HepG2 (cell line): ENCODE measurements at regions of chr21 and their contacts with region 1.

Region 1: GRCh38 chr21:32359711-32360260 is 33.0 kb downstream of the URB1 start:
- DNase-seq: peak; percentile 52
- ATAC-seq: peak; percentile 80
- H3K4me3 ChIP-seq: no peak overlapping the region
- H3K27ac ChIP-seq: no peak overlapping the region
- H3K4me1 ChIP-seq: peaks cover 15% of the 10 kb centered on the region
- H3K27me3 ChIP-seq: no peaks in the 10 kb centered on the region
- CTCF ChIP-seq: peak; percentile 60
- EP300 ChIP-seq: no peak
- POLR2A ChIP-seq: no peak
- RAD21 ChIP-seq: no peak

Region 2: GRCh38 chr21:32306021-32306780 is 53.6 kb before region 1 on chr21:
- CTCF ChIA-PET with region 1: no interaction called
- POLR2A ChIA-PET with region 1: no interaction called
- in situ Hi-C with region 1: no loop called
- intact Hi-C with region 1: loop called (anchors 5 kb)
- DNase-seq: peak; percentile 41
- ATAC-seq: peak; percentile 85
- H3K4me3 ChIP-seq: no peak overlapping the region
- H3K27ac ChIP-seq: no peak overlapping the region
- H3K4me1 ChIP-seq: peaks cover 27% of the 10 kb centered on the region
- H3K27me3 ChIP-seq: no peaks in the 10 kb centered on the region
- CTCF ChIP-seq: peak; percentile 30; the same call in 1 of the 2 replicates
- EP300 ChIP-seq: no peak
- POLR2A ChIP-seq: no peak
- RAD21 ChIP-seq: no peak

Region 3: GRCh38 chr21:32348654-32349587 is 10.9 kb before region 1 on chr21:
- CTCF ChIA-PET with region 1: no interaction called
- POLR2A ChIA-PET with region 1: no interaction called
- in situ Hi-C with region 1: no loop called
- intact Hi-C with region 1: no loop called
- DNase-seq: no peak
- ATAC-seq: no peak
- H3K4me3 ChIP-seq: no peak overlapping the region
- H3K27ac ChIP-seq: no peak overlapping the region
- H3K4me1 ChIP-seq: no peaks in the 10 kb centered on the region
- H3K27me3 ChIP-seq: no peaks in the 10 kb centered on the region
- CTCF ChIP-seq: no peak
- EP300 ChIP-seq: no peak
- POLR2A ChIP-seq: no peak
- RAD21 ChIP-seq: no peak

Region 4: GRCh38 chr21:32412162-32413014 is 52.6 kb after region 1 on chr21 and contains the start of gene EVA1C:
- CTCF ChIA-PET with region 1: no interaction called
- POLR2A ChIA-PET with region 1: no interaction called
- in situ Hi-C with region 1: no loop called
- intact Hi-C with region 1: no loop called
- DNase-seq: no peak
- ATAC-seq: peak; percentile 89
- H3K4me3 ChIP-seq: peak within 1 kb of the TSS; percentile 21 to 69 (median 53)
- H3K27ac ChIP-seq: no peak within 1 kb of the TSS
- H3K4me1 ChIP-seq: peaks cover 19% of the 10 kb centered on the region
- H3K27me3 ChIP-seq: peaks cover 5 to 31% of the 10 kb centered on the region in 2 experiments
- CTCF ChIP-seq: no peak
- EP300 ChIP-seq: no peak
- POLR2A ChIP-seq: no peak
- RAD21 ChIP-seq: no peak
- total RNA-seq, gene EVA1C: 0.29 TPM in 1 of 2 replicates, not detected in the other